Adrenal gland (tissue), 19 donors: ENCODE measurements at regions of chr5 and their contacts with region 1.

Region 1: DNA sequence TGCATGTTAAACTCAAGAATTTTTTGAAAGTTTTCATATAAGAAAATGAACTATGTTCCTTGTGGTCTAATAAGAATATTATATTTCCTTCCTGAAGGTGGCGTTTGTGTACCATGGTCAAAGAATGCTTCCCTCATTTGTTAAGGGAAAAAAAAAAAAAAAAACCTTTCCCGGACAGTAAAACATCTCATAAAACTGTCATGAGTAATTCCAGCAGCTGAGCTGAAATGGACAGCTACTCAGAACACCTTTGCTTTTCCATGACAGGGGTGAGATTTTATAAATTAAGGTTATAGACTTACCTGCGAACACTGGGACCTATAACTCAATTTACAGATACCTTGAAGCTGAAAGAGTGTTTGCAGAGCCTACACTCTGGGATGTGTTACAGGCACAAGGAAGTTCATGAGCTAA is 113.2 kb upstream of the RANBP3L start:
- DNase-seq: no peak
- H3K4me3 ChIP-seq: no peak overlapping the region
- H3K27ac ChIP-seq: no peak overlapping the region
- H3K4me1 ChIP-seq: no peaks in the 10 kb centered on the region
- H3K27me3 ChIP-seq: no peaks in the 10 kb centered on the region
- CTCF ChIP-seq: peak; percentile 31 to 81 (median 58)
- POLR2A ChIP-seq: no peak

Region 2: DNA sequence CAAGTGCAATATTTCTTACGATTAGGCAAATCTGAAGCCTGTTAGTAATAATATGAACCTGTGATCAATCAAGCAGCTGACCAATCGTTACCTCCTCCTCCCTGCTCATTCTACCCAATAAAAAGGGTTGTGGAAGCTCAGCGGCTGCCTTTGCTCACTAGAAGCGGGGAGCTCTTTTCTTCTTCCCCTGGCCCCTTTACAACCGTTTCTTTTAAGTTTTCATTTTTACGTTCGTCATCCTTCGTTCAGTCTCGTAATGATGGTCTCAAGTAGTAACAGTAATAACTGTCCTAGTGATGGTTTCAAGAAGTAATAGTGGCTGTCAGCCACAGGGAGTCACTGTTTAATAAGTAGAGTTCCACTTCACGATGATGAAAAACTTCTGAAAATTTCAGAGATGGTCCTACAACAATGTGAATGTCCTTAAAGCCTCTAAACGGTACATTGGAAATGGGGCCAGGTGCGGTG is 354.4 kb before region 1 on chr5:
- intact Hi-C with region 1: no loop called
- DNase-seq: no peak
- H3K4me3 ChIP-seq: no peak overlapping the region
- H3K27ac ChIP-seq: no peak overlapping the region
- H3K4me1 ChIP-seq: no peaks in the 10 kb centered on the region
- H3K27me3 ChIP-seq: no peaks in the 10 kb centered on the region
- CTCF ChIP-seq: peak in 1 of 6 experiments; percentile 22
- POLR2A ChIP-seq: no peak

Region 3: GRCh38 chr5:36138900-36139683 is 275.8 kb before region 1 on chr5:
- intact Hi-C with region 1: no loop called
- DNase-seq: no peak
- H3K4me3 ChIP-seq: no peak overlapping the region
- H3K27ac ChIP-seq: no peak overlapping the region
- H3K4me1 ChIP-seq: no peaks in the 10 kb centered on the region
- H3K27me3 ChIP-seq: no peaks in the 10 kb centered on the region
- CTCF ChIP-seq: no peak
- POLR2A ChIP-seq: no peak

Region 4: DNA sequence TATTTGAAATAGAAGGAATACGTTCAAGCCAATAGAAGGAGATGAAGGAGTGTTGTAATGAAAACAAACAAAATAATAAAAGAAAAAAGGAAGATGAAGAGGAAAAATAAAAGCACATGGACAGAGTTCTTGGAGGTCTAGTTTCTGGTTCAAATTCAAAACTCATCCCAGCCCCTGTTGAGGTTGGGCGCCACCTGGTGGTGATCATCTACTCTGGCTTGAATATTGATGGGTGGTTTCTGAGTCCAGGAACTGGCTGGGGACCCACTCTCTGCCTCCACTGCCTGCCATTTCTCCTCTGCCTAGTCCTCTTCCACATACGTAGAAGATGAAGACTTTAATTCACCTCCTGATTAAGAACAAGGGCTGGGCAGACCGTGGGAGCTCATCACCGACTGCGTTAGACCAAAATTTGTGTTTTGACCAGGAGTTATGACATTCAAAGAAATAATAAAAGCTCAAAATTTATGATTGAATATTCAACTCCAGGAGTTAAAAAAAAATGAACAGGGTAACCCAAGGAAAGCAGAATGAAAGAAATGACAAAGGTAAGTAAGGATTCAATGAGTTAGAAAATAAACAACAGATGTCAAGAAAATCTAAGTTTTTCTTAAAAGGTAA is 92.6 kb after region 1 on chr5:
- intact Hi-C with region 1: loop called (anchors 5 kb)
- DNase-seq: peak; percentile 74 to 90 (median 80)
- H3K4me3 ChIP-seq: no peak overlapping the region
- H3K27ac ChIP-seq: no peak overlapping the region
- H3K4me1 ChIP-seq: no peaks in the 10 kb centered on the region
- H3K27me3 ChIP-seq: peaks cover 5% of the 10 kb centered on the region
- CTCF ChIP-seq: peak; percentile 65 to 90 (median 83)
- POLR2A ChIP-seq: no peak

Region 5: DNA sequence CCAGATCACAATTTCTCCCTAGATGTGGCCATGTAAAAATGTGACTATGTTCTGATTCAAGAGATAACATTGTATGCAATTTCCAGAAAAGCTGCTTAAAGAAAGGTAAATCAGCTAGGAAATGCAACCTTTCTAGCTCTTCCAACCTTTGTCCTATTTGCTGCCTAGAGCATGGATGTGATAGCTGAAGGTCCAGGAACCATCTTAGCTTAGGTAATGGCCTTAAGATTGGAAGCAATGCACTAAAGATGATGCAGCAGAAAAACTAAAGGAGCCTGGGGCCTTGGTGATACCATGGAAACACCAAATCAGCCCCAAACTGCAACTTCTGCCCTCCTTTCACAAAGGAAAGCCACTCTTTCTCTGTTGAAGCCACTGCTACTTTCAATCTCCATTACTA is 807.3 kb after region 1 on chr5:
- intact Hi-C with region 1: no loop called
- DNase-seq: no peak
- H3K4me3 ChIP-seq: no peak overlapping the region
- H3K27ac ChIP-seq: no peak overlapping the region
- H3K4me1 ChIP-seq: no peaks in the 10 kb centered on the region
- H3K27me3 ChIP-seq: no peaks in the 10 kb centered on the region
- CTCF ChIP-seq: no peak
- POLR2A ChIP-seq: no peak